ENCODE measurements at regions of chr15 and their contacts with region 1.

Region 1: DNA sequence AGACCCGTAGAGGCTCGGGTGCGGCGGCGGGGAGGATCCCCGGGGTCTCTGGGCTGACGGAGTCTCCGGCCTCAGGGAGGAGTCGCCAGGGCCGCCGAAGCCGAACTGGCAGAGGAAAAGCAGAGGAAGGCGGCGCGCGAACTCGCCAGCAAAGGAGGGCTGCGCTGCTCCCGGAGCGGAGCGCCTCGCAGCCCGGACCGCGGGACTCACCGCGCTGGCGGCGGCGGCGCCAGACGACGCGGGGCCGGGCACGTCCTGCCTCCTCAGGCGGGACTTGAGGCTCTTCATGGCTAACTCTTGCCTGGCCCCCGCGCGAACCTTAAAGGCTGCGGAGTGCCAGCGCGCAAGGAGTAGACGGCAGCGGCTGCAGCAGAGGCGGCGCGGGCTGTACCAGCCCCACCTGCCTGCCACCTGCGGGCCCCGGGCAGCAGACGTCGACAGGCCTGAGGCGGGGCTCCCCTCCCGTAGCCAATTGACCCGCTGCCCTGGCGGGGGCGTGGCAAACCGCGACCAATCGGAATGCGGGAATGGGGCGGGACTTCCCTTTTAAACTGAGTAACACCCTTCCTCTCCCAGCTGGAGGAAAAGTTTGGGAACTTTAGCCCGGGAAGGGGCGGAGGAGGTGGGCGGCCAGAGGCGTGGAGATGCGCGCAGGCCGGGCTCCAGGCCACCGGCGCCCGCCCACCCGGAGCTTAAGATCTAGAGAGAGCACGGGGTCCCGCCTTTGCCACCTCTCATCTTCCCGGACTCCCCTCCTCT is at the start of gene UACA:
- DNase-seq: peak; percentile 96 to 99 (median 97)
- H3K4me3 ChIP-seq: peak within 1 kb of the TSS; percentile 73
- H3K27ac ChIP-seq: peak within 1 kb of the TSS; percentile 90
- H3K4me1 ChIP-seq: peaks cover 3% of the 10 kb centered on the region
- H3K27me3 ChIP-seq: no peaks in the 10 kb centered on the region
- CTCF ChIP-seq: no peak
- EP300 ChIP-seq: no peak
- POLR2A ChIP-seq: peak; percentile 85
- total RNA-seq, gene UACA: 40.7 to 62.0 (median 53.4) TPM

Region 2: DNA sequence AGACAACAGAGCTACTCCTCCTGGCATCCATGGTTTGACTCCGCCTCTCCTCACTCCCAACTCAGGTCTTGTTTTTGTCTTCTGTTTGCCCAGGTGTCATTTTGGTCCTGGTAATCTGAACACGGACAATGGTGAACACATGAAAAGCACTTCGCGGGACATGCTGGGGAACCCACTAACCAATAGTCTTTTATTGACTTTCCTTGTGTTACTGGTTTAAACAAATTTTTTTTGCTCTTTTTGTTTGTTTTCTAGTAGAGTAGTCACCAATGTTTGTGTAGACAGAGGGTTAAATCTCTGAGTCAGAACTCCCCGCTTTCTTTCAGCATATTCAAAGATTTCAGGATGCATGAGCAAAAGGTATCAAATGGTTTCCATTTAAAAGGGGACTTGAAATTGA is 52.3 kb after region 1 on chr15:
- intact Hi-C with region 1: loop called in 1 of 4 experiments (anchors 10 kb)
- DNase-seq: no peak
- H3K4me3 ChIP-seq: no peak overlapping the region
- H3K27ac ChIP-seq: no peak overlapping the region
- H3K4me1 ChIP-seq: peaks cover 1% of the 10 kb centered on the region
- H3K27me3 ChIP-seq: no peaks in the 10 kb centered on the region
- CTCF ChIP-seq: no peak
- EP300 ChIP-seq: no peak
- POLR2A ChIP-seq: no peak

Measured in ovary (tissue), 10 donors.